ENCODE measurements at regions of chrX and their contacts with region 1.

Region 1: GRCh38 chrX:136168929-136169735 is 21.8 kb downstream of the FHL1 start:
- DNase-seq: peak in 1 of 2 donors; percentile 92
- H3K4me3 ChIP-seq: peak overlapping the region in 1 of 2 donors; percentile 51
- H3K27ac ChIP-seq: peak overlapping the region; percentile 78 to 81
- H3K4me1 ChIP-seq: peaks cover 0 to 33% of the 10 kb centered on the region in 2 donors
- H3K27me3 ChIP-seq: no peaks in the 10 kb centered on the region
- CTCF ChIP-seq: no peak

Region 2: DNA sequence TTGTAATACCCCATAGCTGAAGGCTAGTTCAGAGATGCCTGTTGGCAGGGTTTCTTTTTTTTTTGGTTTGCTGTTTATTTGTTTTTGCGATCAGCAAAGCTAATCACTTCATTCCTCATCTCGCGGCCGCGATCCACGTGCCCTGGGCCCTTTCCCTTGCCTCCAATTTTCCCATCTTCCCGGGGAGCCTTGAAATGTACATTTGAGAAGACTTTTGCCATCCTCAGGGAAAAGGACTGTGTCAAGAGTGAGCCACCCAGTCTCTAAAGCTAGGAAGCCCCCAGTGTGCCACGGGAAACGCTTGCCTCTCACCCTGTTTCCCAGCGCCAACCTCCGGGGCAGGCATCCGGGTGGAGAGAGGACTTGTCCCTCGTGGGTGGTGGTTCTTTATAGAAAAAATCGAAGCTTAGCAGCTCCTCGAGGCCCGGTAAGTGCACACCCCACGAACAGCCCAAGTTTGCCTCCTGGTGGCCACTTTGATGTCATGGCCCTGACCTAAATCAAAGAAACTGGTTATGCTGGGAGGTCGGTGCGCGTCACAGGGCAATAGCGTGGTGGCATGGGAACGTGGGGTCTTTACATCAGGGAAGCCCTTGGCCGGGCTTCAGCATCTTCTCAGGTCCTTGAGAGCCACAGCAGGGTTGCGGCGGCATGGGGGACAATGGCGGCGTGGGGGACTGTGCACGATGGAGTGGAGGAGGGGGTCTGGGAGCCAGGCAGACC is 40.0 kb after region 1 on chrX:
- intact Hi-C with region 1: loop called (anchors 2 kb)
- DNase-seq: peak in 1 of 2 donors; percentile 77
- H3K4me3 ChIP-seq: peak overlapping the region; percentile 20 to 21
- H3K27ac ChIP-seq: peak overlapping the region; percentile 60 to 62
- H3K4me1 ChIP-seq: peaks cover 12 to 32% of the 10 kb centered on the region in 2 donors
- H3K27me3 ChIP-seq: no peaks in the 10 kb centered on the region
- CTCF ChIP-seq: peak; percentile 36 to 59 (median 58)

Region 3: DNA sequence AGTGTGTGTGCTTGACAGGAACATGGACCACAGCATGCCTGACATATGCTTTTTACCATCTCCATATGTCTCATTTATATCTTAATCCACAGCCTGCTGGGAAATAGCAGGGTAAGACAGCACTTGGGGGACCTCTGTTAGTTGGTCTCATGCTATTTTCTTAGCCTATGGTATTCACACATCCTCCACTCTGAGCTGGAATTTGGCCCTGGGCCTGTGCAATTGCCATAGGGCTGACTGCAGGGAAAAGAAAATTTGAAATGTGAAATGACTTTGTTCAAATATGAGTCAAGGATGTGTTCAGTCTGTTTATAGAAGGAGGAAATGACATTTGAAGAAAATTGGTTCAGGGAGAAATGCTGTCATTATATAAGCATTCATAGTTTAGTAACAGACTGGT is 91.6 kb after region 1 on chrX:
- intact Hi-C with region 1: loop called (anchors 5 kb)
- DNase-seq: peak in 1 of 2 donors; percentile 82
- H3K4me3 ChIP-seq: no peak overlapping the region
- H3K27ac ChIP-seq: peak overlapping the region; percentile 88 to 91
- H3K4me1 ChIP-seq: peaks cover 0 to 43% of the 10 kb centered on the region in 2 donors
- H3K27me3 ChIP-seq: no peaks in the 10 kb centered on the region
- CTCF ChIP-seq: no peak

Region 4: DNA sequence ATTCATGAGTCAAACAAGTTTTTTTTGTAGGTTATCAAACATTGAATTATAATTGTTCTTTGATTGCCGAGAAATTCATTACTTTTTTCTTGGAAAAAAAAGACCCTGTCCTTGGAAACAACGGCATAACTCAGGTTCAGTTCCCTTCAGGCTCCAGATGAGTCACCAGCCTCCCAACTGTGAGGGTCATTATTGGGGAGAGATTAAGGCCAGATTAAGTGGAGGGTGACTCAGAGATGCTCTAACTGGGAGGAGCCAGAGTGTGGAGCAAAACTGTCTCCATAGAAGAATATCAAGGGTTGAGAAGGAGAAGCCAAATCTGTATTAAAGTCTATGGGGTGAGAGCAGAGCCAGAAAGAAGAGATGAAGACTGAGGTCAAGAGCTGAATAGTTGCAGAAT is 141.3 kb after region 1 on chrX:
- intact Hi-C with region 1: no loop called
- DNase-seq: no peak
- H3K4me3 ChIP-seq: no peak overlapping the region
- H3K27ac ChIP-seq: no peak overlapping the region
- H3K4me1 ChIP-seq: no peaks in the 10 kb centered on the region
- H3K27me3 ChIP-seq: no peaks in the 10 kb centered on the region
- CTCF ChIP-seq: no peak

Measured in ascending aorta (tissue), 2 donors.